ENCODE measurements at regions of chr17 and their contacts with region 1.

Region 1: DNA sequence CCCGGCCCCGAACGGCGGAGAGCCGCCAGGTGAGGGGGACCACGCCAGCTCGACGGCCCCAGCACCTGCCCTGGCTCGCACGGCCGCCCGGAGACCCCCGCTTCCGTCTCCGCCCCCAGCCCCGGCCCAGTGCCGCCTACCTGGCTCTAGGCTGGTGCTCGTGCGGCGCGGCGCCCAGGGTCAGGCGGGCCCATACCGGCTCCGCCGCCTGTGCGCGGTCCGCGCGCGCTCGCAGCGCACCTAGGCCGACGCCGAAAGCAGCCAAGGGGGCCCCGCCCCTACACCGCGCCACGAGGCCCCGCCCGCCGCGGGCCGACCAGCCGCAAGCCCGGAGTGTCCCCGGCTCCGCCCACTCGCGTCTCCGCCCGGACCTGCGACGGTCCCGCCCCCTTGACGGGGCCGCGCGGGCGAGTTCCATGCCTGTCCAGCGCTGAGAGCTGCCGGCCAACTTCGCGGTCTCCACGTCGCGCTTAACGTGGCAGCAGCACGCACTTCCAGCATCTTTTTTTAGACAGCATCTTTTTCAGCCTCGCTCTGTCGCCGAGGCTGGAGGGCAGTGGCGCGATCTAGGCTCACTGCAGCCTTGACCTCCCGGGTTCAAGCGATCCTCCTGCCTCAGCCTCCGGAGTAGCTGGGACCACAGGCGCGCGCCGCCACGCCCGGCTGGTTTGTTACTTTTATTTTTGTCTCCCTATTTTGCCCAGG is at the start of gene SLC25A39:
- DNase-seq: peak; percentile 87 to 99 (median 94)
- ATAC-seq: peak; percentile 91
- H3K4me3 ChIP-seq: peak within 1 kb of the TSS; percentile 98
- H3K4me3 Mint-ChIP-seq: peak within 1 kb of the TSS; percentile 90 to 96 (median 93)
- H3K27ac ChIP-seq: peak within 1 kb of the TSS; percentile 83
- H3K27ac Mint-ChIP-seq: peak within 1 kb of the TSS; percentile 89 to 98 (median 95)
- H3K4me1 ChIP-seq: peaks cover 13 to 17% of the 10 kb centered on the region in 2 donors
- H3K4me1 Mint-ChIP-seq: peaks cover 0 to 38% (median 19%) of the 10 kb centered on the region in 7 donors
- H3K27me3 ChIP-seq: no peaks in the 10 kb centered on the region
- H3K27me3 Mint-ChIP-seq: no peaks in the 10 kb centered on the region
- total RNA-seq, gene SLC25A39: 75.4 to 107 (median 101) TPM

Region 2: GRCh38 chr17:44070455-44071197 is 254.1 kb before region 1 on chr17 and contains the start of gene G6PC3:
- CTCF ChIA-PET with region 1: no interaction called
- POLR2A ChIA-PET with region 1: no interaction called
- intact Hi-C with region 1: loop called (anchors 2 to 5 kb)
- DNase-seq: peak; percentile 35 to 86 (median 49)
- ATAC-seq: peak; percentile 67
- H3K4me3 ChIP-seq: peak within 1 kb of the TSS; percentile 75
- H3K4me3 Mint-ChIP-seq: peak within 1 kb of the TSS; percentile 91 to 97 (median 94)
- H3K27ac ChIP-seq: peak within 1 kb of the TSS; percentile 83
- H3K27ac Mint-ChIP-seq: peak within 1 kb of the TSS; percentile 29 to 96 (median 93)
- H3K4me1 ChIP-seq: peaks cover 21 to 24% of the 10 kb centered on the region in 2 donors
- H3K4me1 Mint-ChIP-seq: peaks cover 31 to 49% (median 36%) of the 10 kb centered on the region in 7 donors
- H3K27me3 ChIP-seq: no peaks in the 10 kb centered on the region
- H3K27me3 Mint-ChIP-seq: no peaks in the 10 kb centered on the region
- total RNA-seq, gene G6PC3: 9.4 to 25.8 (median 13.9) TPM

Region 3: GRCh38 chr17:44199553-44200477 is 124.9 kb before region 1 on chr17 and contains the start of gene ATXN7L3:
- CTCF ChIA-PET with region 1: no interaction called
- POLR2A ChIA-PET with region 1: interaction called, 17 read pairs
- intact Hi-C with region 1: loop called (anchors 1 kb)
- DNase-seq: peak; percentile 90 to 99 (median 98)
- ATAC-seq: peak; percentile 91
- H3K4me3 ChIP-seq: peak within 1 kb of the TSS; percentile 68
- H3K4me3 Mint-ChIP-seq: peak within 1 kb of the TSS; percentile 90 to 97 (median 92)
- H3K27ac ChIP-seq: peak within 1 kb of the TSS; percentile 93
- H3K27ac Mint-ChIP-seq: peak within 1 kb of the TSS; percentile 91 to 97 (median 96)
- H3K4me1 ChIP-seq: peaks cover 27 to 34% of the 10 kb centered on the region in 2 donors
- H3K4me1 Mint-ChIP-seq: peaks cover 39 to 61% (median 53%) of the 10 kb centered on the region in 7 donors
- H3K27me3 ChIP-seq: no peaks in the 10 kb centered on the region
- H3K27me3 Mint-ChIP-seq: no peaks in the 10 kb centered on the region
- total RNA-seq, gene ATXN7L3: 93.5 to 130 (median 124) TPM

Region 4: DNA sequence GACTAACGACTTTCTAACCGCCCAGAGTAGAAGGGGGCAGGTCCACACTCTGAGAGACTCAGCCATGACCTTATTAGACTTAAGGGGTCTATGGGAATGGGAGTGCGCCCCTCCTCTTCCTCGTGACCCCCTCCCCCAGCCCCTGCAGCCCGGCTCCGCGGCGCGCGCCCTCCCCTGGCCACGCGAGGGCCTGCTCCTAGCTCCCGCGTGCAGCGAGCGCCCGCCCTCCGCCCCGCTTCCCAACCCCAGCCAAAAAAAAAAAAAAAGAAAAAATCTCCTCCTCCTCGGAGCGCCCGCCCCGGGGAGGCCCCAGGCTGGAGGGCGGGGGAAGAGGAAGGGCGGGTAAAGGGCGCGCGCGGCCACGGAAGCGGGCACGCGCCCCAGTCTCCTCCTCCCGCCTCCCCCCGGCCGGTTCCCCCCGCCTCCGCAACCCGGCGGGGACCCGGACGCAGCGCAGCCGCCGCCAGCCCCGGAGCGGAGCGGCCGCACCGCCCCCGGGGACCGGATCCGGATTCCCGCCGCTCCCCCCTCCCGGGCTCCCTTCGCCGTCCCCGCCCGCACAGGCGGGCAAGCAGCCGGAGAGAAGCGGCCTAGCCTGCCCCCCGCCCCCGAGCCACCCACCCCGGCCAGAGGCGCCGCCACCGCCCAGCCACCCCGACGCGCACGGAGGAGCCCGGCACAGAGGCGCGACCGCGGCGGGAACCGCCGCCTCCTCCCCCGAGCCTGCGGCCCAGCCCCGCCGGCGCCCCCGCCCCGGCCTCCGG is 106.2 kb before region 1 on chr17:
- CTCF ChIA-PET with region 1: interaction called, 9 read pairs
- POLR2A ChIA-PET with region 1: interaction called, 102 read pairs
- intact Hi-C with region 1: loop called (anchors 1 kb)
- DNase-seq: peak; percentile 82 to 93 (median 92)
- ATAC-seq: peak; percentile 80
- H3K4me3 ChIP-seq: peak overlapping the region; percentile 68
- H3K4me3 Mint-ChIP-seq: peak overlapping the region; percentile 76 to 94 (median 86)
- H3K27ac ChIP-seq: peak overlapping the region; percentile 90
- H3K27ac Mint-ChIP-seq: peak overlapping the region; percentile 84 to 99 (median 97)
- H3K4me1 ChIP-seq: peaks cover 38 to 42% of the 10 kb centered on the region in 2 donors
- H3K4me1 Mint-ChIP-seq: peaks cover 48 to 53% (median 52%) of the 10 kb centered on the region in 7 donors
- H3K27me3 ChIP-seq: no peaks in the 10 kb centered on the region
- H3K27me3 Mint-ChIP-seq: no peaks in the 10 kb centered on the region

Region 5: DNA sequence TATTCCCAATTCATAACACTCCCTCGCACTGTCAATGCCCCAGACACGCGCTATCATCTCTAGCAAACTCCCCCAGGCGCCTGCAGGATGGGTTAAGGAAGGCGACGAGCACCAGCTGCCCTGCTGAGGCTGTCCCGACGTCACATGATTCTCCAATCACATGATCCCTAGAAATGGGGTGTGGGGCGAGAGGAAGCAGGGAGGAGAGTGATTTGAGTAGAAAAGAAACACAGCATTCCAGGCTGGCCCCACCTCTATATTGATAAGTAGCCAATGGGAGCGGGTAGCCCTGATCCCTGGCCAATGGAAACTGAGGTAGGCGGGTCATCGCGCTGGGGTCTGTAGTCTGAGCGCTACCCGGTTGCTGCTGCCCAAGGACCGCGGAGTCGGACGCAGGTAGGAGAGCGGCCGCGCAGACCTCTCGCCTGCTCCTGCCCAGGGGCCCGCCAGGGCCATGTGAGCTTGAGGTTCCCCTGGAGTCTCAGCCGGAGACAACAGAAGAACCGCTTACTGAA is 20.3 kb after region 1 on chr17 and contains the start of gene GRN:
- CTCF ChIA-PET with region 1: interaction called, 3 read pairs
- POLR2A ChIA-PET with region 1: interaction called, 5 read pairs
- intact Hi-C with region 1: loop called (anchors 1 kb)
- DNase-seq: peak; percentile 67 to 85 (median 81)
- ATAC-seq: peak; percentile 96
- H3K4me3 ChIP-seq: peak within 1 kb of the TSS; percentile 88
- H3K4me3 Mint-ChIP-seq: peak within 1 kb of the TSS; percentile 88 to 96 (median 93)
- H3K27ac ChIP-seq: peak within 1 kb of the TSS; percentile 71
- H3K27ac Mint-ChIP-seq: peak within 1 kb of the TSS; percentile 42 to 88 (median 79)
- H3K4me1 ChIP-seq: peaks cover 6% of the 10 kb centered on the region in 2 donors
- H3K4me1 Mint-ChIP-seq: peaks cover 8 to 28% (median 19%) of the 10 kb centered on the region in 7 donors
- H3K27me3 ChIP-seq: no peaks in the 10 kb centered on the region
- H3K27me3 Mint-ChIP-seq: peaks cover 0 to 21% (median 7%) of the 10 kb centered on the region in 5 donors
- total RNA-seq, gene GRN: 49.5 to 374 (median 52.2) TPM

Region 6: GRCh38 chr17:44376124-44376523 is 51.4 kb after region 1 on chr17:
- CTCF ChIA-PET with region 1: no interaction called
- POLR2A ChIA-PET with region 1: no interaction called
- intact Hi-C with region 1: no loop called
- DNase-seq: no peak
- ATAC-seq: no peak
- H3K4me3 ChIP-seq: no peak overlapping the region
- H3K4me3 Mint-ChIP-seq: no peak overlapping the region
- H3K27ac ChIP-seq: no peak overlapping the region
- H3K27ac Mint-ChIP-seq: no peak overlapping the region
- H3K4me1 ChIP-seq: no peaks in the 10 kb centered on the region
- H3K4me1 Mint-ChIP-seq: peaks cover 0 to 1% (median 0%) of the 10 kb centered on the region in 7 donors
- H3K27me3 ChIP-seq: no peaks in the 10 kb centered on the region
- H3K27me3 Mint-ChIP-seq: peaks cover 7 to 25% (median 10%) of the 10 kb centered on the region in 5 donors